Breast epithelium (tissue), 4 donors: ENCODE measurements at regions of chr11 and their contacts with region 1.

Region 1: GRCh38 chr11:78145511-78146042 is 6.2 kb upstream of the ALG8 start:
- DNase-seq: no peak
- H3K4me3 ChIP-seq: no peak overlapping the region
- H3K27ac ChIP-seq: no peak overlapping the region
- H3K4me1 ChIP-seq: no peaks in the 10 kb centered on the region
- H3K27me3 ChIP-seq: no peaks in the 10 kb centered on the region
- CTCF ChIP-seq: no peak
- POLR2A ChIP-seq: no peak

Region 2: DNA sequence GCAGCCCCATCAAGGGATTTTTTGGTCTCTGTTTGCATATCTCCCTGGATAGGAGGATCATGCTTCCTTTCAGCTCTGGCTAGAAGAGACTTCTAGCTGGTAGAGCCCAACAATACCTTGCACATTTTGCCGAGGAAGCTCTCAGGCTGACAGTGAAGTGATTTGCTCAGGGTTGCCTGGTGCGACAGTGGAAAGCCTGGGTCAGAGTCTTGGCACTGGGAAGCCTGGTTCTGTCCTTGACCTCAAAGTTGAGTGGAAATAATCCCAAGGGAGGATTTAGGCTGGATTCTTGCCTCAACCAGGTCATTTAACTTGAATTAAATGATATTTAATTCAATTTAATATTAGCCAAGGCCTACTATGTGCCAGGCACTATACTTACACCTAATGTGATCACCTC is 18.3 kb after region 1 on chr11:
- intact Hi-C with region 1: loop called (anchors 2 kb)
- DNase-seq: no peak
- H3K4me3 ChIP-seq: no peak overlapping the region
- H3K27ac ChIP-seq: no peak overlapping the region
- H3K4me1 ChIP-seq: no peaks in the 10 kb centered on the region
- H3K27me3 ChIP-seq: no peaks in the 10 kb centered on the region
- CTCF ChIP-seq: no peak
- POLR2A ChIP-seq: no peak